Psoas muscle (tissue), 8 donors: ENCODE measurements at regions of chr2 and their contacts with region 1.

Region 1: GRCh38 chr2:74454654-74455511 is at the start of gene INO80B:
- DNase-seq: peak; percentile 93 to 96
- ATAC-seq: peak; percentile 73 to 80 (median 76)
- H3K4me3 ChIP-seq: peak within 1 kb of the TSS; percentile 86
- H3K27ac ChIP-seq: peak within 1 kb of the TSS; percentile 81
- H3K4me1 ChIP-seq: peaks cover 26% of the 10 kb centered on the region
- H3K27me3 ChIP-seq: no peaks in the 10 kb centered on the region
- CTCF ChIP-seq: no peak
- total RNA-seq, gene INO80B: 23.6 to 39.0 (median 28.6) TPM

Region 2: DNA sequence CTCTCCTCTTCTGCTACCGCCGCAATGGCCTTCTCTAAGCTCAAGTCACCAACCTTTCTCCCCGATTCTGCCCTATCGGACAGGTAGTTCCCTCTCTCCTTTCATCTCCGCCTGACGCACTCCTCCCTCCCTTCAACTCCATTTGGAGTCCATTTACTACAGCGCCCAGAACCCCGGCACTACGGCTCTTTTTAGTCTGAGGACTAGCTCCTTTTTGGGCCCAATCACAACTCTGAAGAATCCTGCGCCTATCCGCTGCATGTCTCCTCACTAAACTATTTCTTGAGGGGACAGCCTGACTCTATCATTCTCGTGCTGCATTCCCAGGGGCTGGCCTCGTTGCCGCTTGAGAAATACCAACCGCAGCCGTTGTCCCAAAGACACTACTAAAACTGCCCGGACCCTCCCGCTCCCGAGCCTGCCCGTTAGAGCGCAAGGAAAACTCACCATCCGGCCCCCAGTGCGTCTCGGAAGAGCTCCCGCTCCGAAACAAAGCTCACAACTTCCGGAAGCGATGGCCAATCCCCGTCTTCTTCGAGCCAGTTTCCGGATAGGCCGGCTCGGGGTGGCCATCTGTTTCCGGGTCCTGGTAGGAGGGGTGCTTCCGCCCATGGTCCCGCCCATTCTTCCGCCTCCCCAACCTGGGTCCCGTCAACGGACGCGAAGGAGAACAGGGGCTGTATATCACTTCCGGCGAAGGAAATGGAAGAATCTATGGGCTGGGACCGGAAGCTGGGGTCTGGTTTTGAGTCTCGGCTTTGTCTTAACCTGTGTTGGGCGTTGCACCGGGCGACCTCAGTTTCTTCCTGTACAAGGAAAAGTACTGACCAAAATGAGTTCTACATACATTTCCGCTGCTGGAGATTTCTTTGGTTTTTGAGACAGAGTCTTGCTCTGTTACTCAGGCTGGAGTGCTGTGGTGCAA is 717.8 kb before region 1 on chr2 and contains the start of gene TPRKB:
- intact Hi-C with region 1: loop called (anchors 2 to 10 kb)
- DNase-seq: peak; percentile 97 to 98
- ATAC-seq: peak; percentile 100
- H3K4me3 ChIP-seq: peak within 1 kb of the TSS; percentile 71
- H3K27ac ChIP-seq: peak within 1 kb of the TSS; percentile 75
- H3K4me1 ChIP-seq: peaks cover 20% of the 10 kb centered on the region
- H3K27me3 ChIP-seq: no peaks in the 10 kb centered on the region
- CTCF ChIP-seq: no peak
- total RNA-seq, gene TPRKB: 21.8 to 35.1 (median 27.1) TPM

Region 3: DNA sequence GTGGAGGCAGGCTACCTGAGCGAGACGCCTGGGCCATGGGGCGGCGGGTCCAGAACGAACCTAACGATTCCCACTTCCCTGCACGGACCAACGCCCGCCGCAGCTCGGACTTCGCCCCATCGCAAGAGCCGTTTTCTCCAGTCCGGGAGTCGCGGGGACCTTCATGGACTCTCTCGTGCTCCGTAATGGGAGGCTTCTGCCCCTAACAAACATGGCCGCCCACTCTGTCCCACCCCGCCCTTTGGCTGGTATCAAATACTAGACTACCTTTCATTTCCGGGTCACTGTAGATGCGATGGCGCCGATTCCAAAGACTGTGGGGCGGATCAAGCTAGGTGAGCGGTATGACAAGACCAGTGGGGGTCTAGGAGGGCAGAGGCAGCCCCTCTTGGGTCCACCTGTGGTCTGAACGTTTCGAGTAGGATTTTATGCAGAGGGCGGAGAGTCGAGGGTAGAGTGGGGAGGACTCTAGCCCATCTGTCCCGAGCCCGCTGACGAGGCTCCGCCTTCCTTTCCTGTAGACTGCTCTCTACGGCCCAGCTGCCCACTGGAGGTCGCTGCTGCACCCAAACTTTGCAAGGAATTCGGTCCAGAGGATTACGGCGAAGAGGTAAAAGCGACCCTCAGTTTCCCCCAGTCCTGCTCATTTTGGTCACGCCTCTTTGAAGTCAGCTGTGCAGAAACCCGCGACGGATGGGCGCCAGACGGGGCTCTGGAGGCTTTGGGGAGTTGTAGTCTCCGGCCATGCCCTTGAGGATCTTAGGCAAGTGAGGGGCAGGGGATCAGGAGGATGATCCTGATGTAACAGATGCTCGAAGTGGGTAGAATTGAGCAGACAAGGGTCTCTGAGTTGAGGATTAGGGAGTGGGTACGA is 28.2 kb after region 1 on chr2 and contains the starts of genes CCDC142 and TTC31:
- intact Hi-C with region 1: loop called (anchors 1 to 2 kb)
- DNase-seq: peak; percentile 95 to 97
- ATAC-seq: peak; percentile 98 to 99 (median 99)
- H3K4me3 ChIP-seq: peak within 1 kb of the TSS; percentile 98
- H3K27ac ChIP-seq: peak within 1 kb of the TSS; percentile 91
- H3K4me1 ChIP-seq: peaks cover 22% of the 10 kb centered on the region
- H3K27me3 ChIP-seq: no peaks in the 10 kb centered on the region
- CTCF ChIP-seq: peak; percentile 79
- total RNA-seq, gene CCDC142: 2.7 to 8.3 (median 4.5) TPM
- total RNA-seq, gene TTC31: 5.4 to 10.1 (median 8.4) TPM